GM10248 (cell line): ENCODE measurements at regions of chr19 and their contacts with region 1.

Region 1: GRCh38 chr19:2750808-2751443 is 11.1 kb upstream of the SLC39A3 start:
- DNase-seq: no peak
- CTCF ChIP-seq: no peak

Region 2: DNA sequence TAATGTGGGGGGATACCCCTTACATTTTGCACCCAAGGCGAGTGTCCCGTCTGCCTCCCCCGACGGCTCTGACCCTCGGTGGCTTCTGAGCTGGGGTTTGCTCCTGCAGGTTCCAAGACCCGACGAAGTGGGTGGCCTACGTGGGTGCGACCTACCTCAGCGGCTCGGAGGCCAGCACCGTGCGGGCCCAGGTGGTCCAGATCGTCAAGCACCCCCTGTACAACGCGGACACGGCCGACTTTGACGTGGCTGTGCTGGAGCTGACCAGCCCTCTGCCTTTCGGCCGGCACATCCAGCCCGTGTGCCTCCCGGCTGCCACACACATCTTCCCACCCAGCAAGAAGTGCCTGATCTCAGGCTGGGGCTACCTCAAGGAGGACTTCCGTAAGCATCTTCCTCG is 342.7 kb before region 1 on chr19:
- CTCF ChIA-PET with region 1: no interaction called
- POLR2A ChIA-PET with region 1: no interaction called
- DNase-seq: no peak
- CTCF ChIP-seq: no peak

Region 3: GRCh38 chr19:2653710-2654707 is 96.9 kb before region 1 on chr19:
- CTCF ChIA-PET with region 1: interaction called, 88 read pairs
- POLR2A ChIA-PET with region 1: interaction called, 5 read pairs
- DNase-seq: no peak
- CTCF ChIP-seq: no peak

Region 4: GRCh38 chr19:2827840-2828489 is 77.0 kb after region 1 on chr19:
- CTCF ChIA-PET with region 1: no interaction called
- POLR2A ChIA-PET with region 1: no interaction called
- DNase-seq: no peak
- CTCF ChIP-seq: no peak

Region 5: GRCh38 chr19:2952953-2953491 is 202.1 kb after region 1 on chr19:
- CTCF ChIA-PET with region 1: no interaction called
- POLR2A ChIA-PET with region 1: no interaction called
- DNase-seq: no peak
- CTCF ChIP-seq: no peak